ENCODE measurements at regions of chr12 and their contacts with region 1.

Region 1: GRCh38 chr12:85468356-85469157 is 188.5 kb downstream of the ALX1 start:
- DNase-seq: no peak
- H3K4me3 ChIP-seq: no peak overlapping the region
- H3K4me3 Mint-ChIP-seq: peak overlapping the region in 7 of 8 donors; percentile 46 to 78 (median 74)
- H3K27ac ChIP-seq: no peak overlapping the region
- H3K27ac Mint-ChIP-seq: no peak overlapping the region
- H3K4me1 ChIP-seq: no peaks in the 10 kb centered on the region
- H3K4me1 Mint-ChIP-seq: no peaks in the 10 kb centered on the region
- H3K27me3 ChIP-seq: no peaks in the 10 kb centered on the region
- H3K27me3 Mint-ChIP-seq: no peaks in the 10 kb centered on the region

Region 2: DNA sequence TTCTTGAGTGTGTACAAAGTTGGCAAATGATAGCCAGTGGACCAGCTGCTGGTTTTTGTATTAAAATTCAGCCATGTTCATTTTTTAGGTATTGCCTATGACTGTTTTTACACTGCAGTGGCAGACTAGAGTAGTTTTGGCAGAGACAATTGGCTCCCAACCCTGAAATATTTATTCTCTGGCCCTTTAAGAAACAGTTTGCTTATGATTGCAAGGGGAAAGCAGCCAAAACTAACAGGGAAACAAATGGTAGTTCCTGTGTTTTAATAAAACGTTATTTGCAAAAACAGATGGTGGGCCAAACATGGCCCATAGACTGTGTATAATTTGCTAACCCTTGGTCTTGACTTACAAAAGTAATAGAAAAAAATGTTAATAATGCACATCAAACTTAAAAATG is 78.3 kb before region 1 on chr12:
- CTCF ChIA-PET with region 1: no interaction called
- POLR2A ChIA-PET with region 1: no interaction called
- intact Hi-C with region 1: no loop called
- DNase-seq: no peak
- H3K4me3 ChIP-seq: no peak overlapping the region
- H3K4me3 Mint-ChIP-seq: no peak overlapping the region
- H3K27ac ChIP-seq: no peak overlapping the region
- H3K27ac Mint-ChIP-seq: no peak overlapping the region
- H3K4me1 ChIP-seq: no peaks in the 10 kb centered on the region
- H3K4me1 Mint-ChIP-seq: no peaks in the 10 kb centered on the region
- H3K27me3 ChIP-seq: no peaks in the 10 kb centered on the region
- H3K27me3 Mint-ChIP-seq: no peaks in the 10 kb centered on the region

Region 3: DNA sequence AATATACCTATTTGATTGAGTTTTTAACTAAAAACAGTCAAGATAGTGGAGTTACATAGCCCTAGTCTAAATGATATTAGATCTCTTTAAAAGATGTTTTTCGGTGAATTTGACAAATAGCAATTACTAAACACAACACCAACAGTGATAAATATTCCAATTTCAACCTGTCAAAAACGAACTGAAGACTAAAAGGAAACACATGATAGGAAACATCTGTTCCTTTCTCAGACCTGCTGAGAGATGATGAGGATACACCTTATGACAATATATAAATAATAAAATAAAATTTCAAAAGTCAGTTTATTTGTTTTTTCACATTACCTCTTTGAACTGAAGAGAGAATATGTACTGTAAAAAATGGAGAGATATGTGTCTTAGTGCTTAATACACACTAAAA is 135.0 kb after region 1 on chr12:
- CTCF ChIA-PET with region 1: no interaction called
- POLR2A ChIA-PET with region 1: no interaction called
- intact Hi-C with region 1: no loop called
- DNase-seq: no peak
- H3K4me3 ChIP-seq: no peak overlapping the region
- H3K4me3 Mint-ChIP-seq: no peak overlapping the region
- H3K27ac ChIP-seq: no peak overlapping the region
- H3K27ac Mint-ChIP-seq: no peak overlapping the region
- H3K4me1 ChIP-seq: no peaks in the 10 kb centered on the region
- H3K4me1 Mint-ChIP-seq: no peaks in the 10 kb centered on the region
- H3K27me3 ChIP-seq: no peaks in the 10 kb centered on the region
- H3K27me3 Mint-ChIP-seq: no peaks in the 10 kb centered on the region

Region 4: GRCh38 chr12:85872497-85873091 is 404.0 kb after region 1 on chr12:
- CTCF ChIA-PET with region 1: no interaction called
- POLR2A ChIA-PET with region 1: no interaction called
- intact Hi-C with region 1: loop called (anchors 10 kb)
- DNase-seq: peak in 1 of 5 donors; percentile 6
- H3K4me3 ChIP-seq: no peak overlapping the region
- H3K4me3 Mint-ChIP-seq: no peak overlapping the region
- H3K27ac ChIP-seq: no peak overlapping the region
- H3K27ac Mint-ChIP-seq: no peak overlapping the region
- H3K4me1 ChIP-seq: no peaks in the 10 kb centered on the region
- H3K4me1 Mint-ChIP-seq: no peaks in the 10 kb centered on the region
- H3K27me3 ChIP-seq: no peaks in the 10 kb centered on the region
- H3K27me3 Mint-ChIP-seq: no peaks in the 10 kb centered on the region

Region 5: GRCh38 chr12:85920324-85920947 is 451.9 kb after region 1 on chr12:
- CTCF ChIA-PET with region 1: no interaction called
- POLR2A ChIA-PET with region 1: no interaction called
- intact Hi-C with region 1: loop called (anchors 2 kb)
- DNase-seq: peak in 3 of 5 donors; percentile 1 to 5 (median 1)
- H3K4me3 ChIP-seq: no peak overlapping the region
- H3K4me3 Mint-ChIP-seq: no peak overlapping the region
- H3K27ac ChIP-seq: no peak overlapping the region
- H3K27ac Mint-ChIP-seq: no peak overlapping the region
- H3K4me1 ChIP-seq: no peaks in the 10 kb centered on the region
- H3K4me1 Mint-ChIP-seq: no peaks in the 10 kb centered on the region
- H3K27me3 ChIP-seq: no peaks in the 10 kb centered on the region
- H3K27me3 Mint-ChIP-seq: no peaks in the 10 kb centered on the region